Tibial artery (tissue), 4 donors: ENCODE measurements at regions of chr4 and their contacts with region 1.

Region 1: GRCh38 chr4:88706574-88706973 is 8.9 kb upstream of the NAP1L5 start:
- DNase-seq: peak in 1 of 2 donors; percentile 80
- H3K4me3 ChIP-seq: no peak overlapping the region
- H3K27ac ChIP-seq: peak overlapping the region; percentile 62 to 79
- H3K4me1 ChIP-seq: peaks cover 0 to 23% (median 21%) of the 10 kb centered on the region in 4 donors
- H3K27me3 ChIP-seq: no peaks in the 10 kb centered on the region
- CTCF ChIP-seq: peak; percentile 69 to 70

Region 2: GRCh38 chr4:88398381-88398780 is 308.2 kb before region 1 on chr4:
- intact Hi-C with region 1: no loop called
- DNase-seq: no peak
- H3K4me3 ChIP-seq: no peak overlapping the region
- H3K27ac ChIP-seq: no peak overlapping the region
- H3K4me1 ChIP-seq: no peaks in the 10 kb centered on the region
- H3K27me3 ChIP-seq: no peaks in the 10 kb centered on the region
- CTCF ChIP-seq: no peak

Region 3: DNA sequence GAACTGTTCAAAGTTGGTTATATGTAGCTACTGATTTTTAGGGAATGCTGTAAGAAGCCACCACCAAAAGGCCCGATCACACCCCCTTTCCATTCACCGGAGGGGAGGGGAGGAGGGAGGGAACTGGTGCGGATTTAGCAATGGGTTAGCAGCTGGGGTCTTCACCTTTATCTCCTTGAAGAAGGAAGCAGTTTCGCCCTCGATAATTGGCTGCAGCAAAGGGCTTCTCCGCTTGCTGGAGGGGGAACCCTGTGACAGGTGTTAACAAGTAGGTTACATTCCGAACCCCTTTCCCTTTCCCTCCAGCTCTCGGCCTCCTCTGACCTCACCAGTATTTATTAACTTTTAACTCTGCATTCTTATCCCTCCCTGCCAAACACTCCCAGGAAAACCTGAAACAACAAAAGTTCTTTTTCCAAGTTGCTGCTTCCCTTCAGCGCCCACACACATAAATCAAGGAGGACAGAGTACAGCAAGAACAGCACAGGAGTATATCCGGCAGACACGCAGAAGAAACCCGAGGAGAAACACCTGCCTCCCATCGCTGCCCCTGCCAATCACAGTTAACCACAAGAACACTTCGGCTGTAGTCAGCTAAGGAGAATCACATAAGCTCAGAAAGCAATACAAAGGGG is 30.9 kb after region 1 on chr4:
- intact Hi-C with region 1: no loop called
- DNase-seq: no peak
- H3K4me3 ChIP-seq: no peak overlapping the region
- H3K27ac ChIP-seq: peak overlapping the region; percentile 41 to 52
- H3K4me1 ChIP-seq: peaks cover 0 to 63% (median 37%) of the 10 kb centered on the region in 4 donors
- H3K27me3 ChIP-seq: no peaks in the 10 kb centered on the region
- CTCF ChIP-seq: no peak

Region 4: GRCh38 chr4:89024051-89024675 is 317.6 kb after region 1 on chr4:
- intact Hi-C with region 1: loop called (anchors 2 kb)
- DNase-seq: peak in 1 of 2 donors; percentile 66
- H3K4me3 ChIP-seq: no peak overlapping the region
- H3K27ac ChIP-seq: no peak overlapping the region
- H3K4me1 ChIP-seq: peaks cover 0 to 24% (median 2%) of the 10 kb centered on the region in 4 donors
- H3K27me3 ChIP-seq: no peaks in the 10 kb centered on the region
- CTCF ChIP-seq: peak; percentile 74 to 95

Region 5: DNA sequence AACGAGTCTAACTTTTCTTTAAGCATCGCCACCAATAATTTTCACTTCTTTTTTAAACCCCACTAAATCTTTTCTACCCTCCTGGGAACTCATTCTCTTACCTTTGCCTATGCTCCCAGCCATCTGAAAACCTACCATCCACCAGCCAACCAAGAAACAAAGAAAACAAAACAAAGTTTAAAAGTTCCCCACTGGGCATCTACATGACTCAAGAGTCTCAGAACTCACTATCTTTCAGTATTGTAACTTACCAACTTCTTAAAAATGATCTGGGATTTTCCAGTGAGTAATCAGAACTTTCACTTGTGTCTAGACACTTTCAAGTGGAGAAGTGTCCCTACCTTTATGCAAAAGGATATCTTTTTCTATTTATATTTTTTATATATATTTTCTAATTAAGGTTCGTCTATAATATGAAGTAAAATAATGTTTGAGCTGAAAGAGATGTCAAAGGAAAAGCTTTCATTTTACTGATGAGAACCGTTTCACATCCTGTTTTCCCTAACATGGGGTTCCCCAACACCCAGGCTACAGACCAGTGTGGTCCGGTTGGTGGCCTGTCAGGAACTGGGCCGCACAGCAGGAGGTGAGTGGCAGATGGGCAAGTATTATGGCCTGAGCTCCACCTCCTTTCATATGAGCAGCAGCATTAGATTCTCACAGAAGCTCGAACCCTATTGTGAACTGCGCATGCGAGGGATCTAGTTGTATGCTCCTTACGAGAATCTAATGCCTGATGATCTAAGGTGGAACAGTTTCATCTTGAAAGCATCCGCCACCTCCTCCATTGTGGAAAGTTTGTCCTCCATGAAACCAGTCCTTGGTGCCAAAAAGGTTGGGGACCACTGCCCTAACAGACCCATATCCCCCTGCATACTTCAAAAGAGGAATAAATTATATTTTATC is 394.9 kb after region 1 on chr4:
- intact Hi-C with region 1: loop called (anchors 10 kb)
- DNase-seq: no peak
- H3K4me3 ChIP-seq: no peak overlapping the region
- H3K27ac ChIP-seq: no peak overlapping the region
- H3K4me1 ChIP-seq: no peaks in the 10 kb centered on the region
- H3K27me3 ChIP-seq: no peaks in the 10 kb centered on the region
- CTCF ChIP-seq: no peak